CD4-positive, alpha-beta T cell (primary cell): ENCODE measurements at regions of chr16 and their contacts with region 1.

Region 1: DNA sequence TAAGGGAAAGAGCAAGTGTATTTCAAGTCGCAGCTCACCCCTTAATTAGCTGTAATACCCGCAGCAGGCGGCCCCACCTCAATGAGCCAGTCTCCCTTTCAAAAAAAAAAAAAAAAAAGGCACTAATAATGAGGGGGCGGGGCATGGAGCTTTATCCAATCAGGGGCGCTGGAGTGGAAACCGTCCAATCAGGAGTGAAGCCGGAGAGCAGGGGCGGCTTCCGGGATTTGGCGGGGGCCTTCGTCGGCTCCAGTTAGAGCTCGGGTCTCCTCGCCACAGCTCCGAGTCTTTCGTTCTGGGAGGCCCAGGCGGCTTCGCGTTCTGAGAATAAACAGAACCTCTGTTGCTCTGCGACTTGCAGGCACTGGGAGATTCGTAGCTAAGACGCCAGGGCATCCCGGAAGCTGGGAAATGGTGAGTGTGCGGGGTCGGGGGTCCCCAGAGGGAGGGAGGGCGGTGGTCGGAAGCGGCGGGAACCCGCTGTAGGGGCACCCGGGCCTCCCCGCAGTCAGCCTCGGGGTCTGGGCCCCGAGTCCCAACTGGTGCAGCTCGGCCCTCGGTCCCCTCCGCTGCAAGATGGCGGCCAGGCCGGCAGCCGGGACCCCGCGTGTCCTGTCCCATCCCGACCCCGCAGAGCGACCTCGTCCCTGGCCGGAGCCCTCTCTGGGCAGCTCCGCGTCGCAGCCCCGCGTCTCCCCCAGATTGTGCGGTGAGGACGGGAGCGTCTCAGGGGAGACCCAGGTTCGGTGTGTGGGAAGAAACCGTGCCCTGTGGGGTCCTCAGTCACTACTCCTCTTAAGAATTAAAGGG is at the start of gene ZNF267:
- DNase-seq: peak; percentile 88 to 97 (median 92)
- ATAC-seq: peak; percentile 69
- H3K4me3 ChIP-seq: peak within 1 kb of the TSS; percentile 84
- H3K4me3 Mint-ChIP-seq: peak within 1 kb of the TSS; percentile 98
- H3K27ac ChIP-seq: peak within 1 kb of the TSS; percentile 82 to 94
- H3K27ac Mint-ChIP-seq: peak within 1 kb of the TSS; percentile 74
- H3K4me1 ChIP-seq: peaks cover 80% of the 10 kb centered on the region
- H3K4me1 Mint-ChIP-seq: peaks cover 72% of the 10 kb centered on the region
- H3K27me3 ChIP-seq: no peaks in the 10 kb centered on the region
- H3K27me3 Mint-ChIP-seq: no peaks in the 10 kb centered on the region
- CTCF ChIP-seq: no peak
- total RNA-seq, gene ZNF267: 56.0 to 57.9 TPM

Region 2: DNA sequence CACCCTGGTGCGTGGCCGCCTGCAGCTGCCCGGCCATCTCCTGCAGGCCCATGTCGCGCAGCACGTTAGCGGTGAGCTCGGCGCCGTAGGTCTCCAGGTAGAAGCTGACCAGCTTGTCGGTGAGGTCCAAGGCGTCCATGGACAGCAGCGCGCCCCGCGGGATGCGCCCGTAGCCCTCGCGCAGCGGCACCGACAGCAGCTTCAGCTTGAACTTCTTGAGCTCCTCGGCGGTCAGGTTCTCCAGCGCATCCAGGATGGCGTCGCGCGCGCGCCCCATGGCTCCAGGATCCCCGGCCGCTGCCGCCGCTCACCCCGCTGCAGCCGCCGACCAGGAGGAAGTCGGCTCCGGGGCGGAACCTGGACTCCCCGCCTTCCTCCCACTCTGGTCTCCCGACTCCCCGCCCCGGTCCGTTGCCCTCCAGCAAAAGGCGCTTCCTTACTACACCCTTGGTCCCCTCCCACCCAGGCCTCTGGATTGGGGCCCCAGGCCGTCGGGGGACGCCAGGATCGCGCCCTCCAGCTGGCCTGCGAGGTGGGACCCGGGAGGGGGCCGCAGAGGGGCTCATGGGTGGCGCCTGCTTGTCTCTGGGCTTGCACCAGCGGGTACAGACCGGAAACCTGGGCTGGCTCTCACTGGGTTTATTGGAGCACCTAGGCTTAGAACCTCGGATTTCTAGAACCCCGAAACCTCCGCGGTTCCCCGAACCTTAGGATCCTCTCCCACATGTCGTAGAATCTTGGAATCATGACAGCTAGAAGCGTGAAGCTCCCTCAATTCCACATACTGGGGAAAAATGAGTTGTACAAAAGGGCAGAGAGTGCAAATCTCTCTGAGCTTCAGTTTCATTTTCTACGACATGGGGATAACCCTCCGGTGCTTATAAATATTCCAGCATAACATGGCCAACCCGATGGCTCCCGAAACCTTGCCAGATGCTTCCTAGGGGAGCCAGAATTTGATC is 671.1 kb before region 1 on chr16 and contains the start of gene PYCARD:
- CTCF ChIA-PET with region 1: no interaction called
- POLR2A ChIA-PET with region 1: no interaction called
- intact Hi-C with region 1: loop called in 1 of 2 experiments (anchors 10 kb)
- DNase-seq: peak in 7 of 14 experiments; percentile 24 to 64 (median 43)
- ATAC-seq: peak; percentile 27
- H3K4me3 ChIP-seq: peak within 1 kb of the TSS; percentile 92
- H3K4me3 Mint-ChIP-seq: peak within 1 kb of the TSS; percentile 94
- H3K27ac ChIP-seq: peak within 1 kb of the TSS in 1 of 2 donors; percentile 60
- H3K27ac Mint-ChIP-seq: peak within 1 kb of the TSS; percentile 90
- H3K4me1 ChIP-seq: peaks cover 45% of the 10 kb centered on the region
- H3K4me1 Mint-ChIP-seq: peaks cover 53% of the 10 kb centered on the region
- H3K27me3 ChIP-seq: no peaks in the 10 kb centered on the region
- H3K27me3 Mint-ChIP-seq: no peaks in the 10 kb centered on the region
- CTCF ChIP-seq: no peak
- total RNA-seq, gene PYCARD: 8.1 to 8.5 TPM

Region 3: DNA sequence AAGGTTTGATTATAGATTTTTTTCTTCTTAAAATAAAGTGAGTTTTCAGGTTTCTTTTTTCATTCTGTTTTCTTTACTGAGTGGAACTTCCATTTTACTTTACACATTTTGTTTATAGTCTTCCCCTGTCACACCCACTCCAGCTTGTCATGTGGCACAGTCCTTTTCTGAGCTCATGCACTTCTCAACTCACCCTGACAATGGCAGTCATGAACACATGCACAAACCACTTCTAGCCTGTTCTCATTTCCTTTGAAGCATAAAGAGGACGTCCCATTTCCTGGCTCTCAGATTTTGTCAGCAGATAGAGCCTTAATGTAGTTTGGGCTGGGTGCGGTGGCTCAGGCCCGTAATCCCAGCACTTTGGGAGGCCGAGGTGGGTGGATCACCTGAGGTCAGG is 178.1 kb before region 1 on chr16:
- CTCF ChIA-PET with region 1: interaction called, 3 read pairs
- POLR2A ChIA-PET with region 1: interaction called, 17 read pairs
- intact Hi-C with region 1: loop called (anchors 2 to 5 kb)
- DNase-seq: peak in 12 of 14 experiments; percentile 27 to 93 (median 53)
- ATAC-seq: peak; percentile 94
- H3K4me3 ChIP-seq: no peak overlapping the region
- H3K4me3 Mint-ChIP-seq: no peak overlapping the region
- H3K27ac ChIP-seq: peak overlapping the region in 1 of 2 donors; percentile 50
- H3K27ac Mint-ChIP-seq: no peak overlapping the region
- H3K4me1 ChIP-seq: peaks cover 31% of the 10 kb centered on the region
- H3K4me1 Mint-ChIP-seq: peaks cover 14% of the 10 kb centered on the region
- H3K27me3 ChIP-seq: no peaks in the 10 kb centered on the region
- H3K27me3 Mint-ChIP-seq: no peaks in the 10 kb centered on the region
- CTCF ChIP-seq: no peak

Region 4: GRCh38 chr16:31700526-31701388 is 173.0 kb before region 1 on chr16:
- CTCF ChIA-PET with region 1: interaction called, 3 read pairs
- POLR2A ChIA-PET with region 1: interaction called, 17 read pairs
- intact Hi-C with region 1: loop called (anchors 2 to 5 kb)
- DNase-seq: peak; percentile 67 to 93 (median 80)
- ATAC-seq: peak; percentile 72
- H3K4me3 ChIP-seq: peak overlapping the region; percentile 89
- H3K4me3 Mint-ChIP-seq: peak overlapping the region; percentile 96
- H3K27ac ChIP-seq: peak overlapping the region; percentile 88 to 92
- H3K27ac Mint-ChIP-seq: peak overlapping the region; percentile 99
- H3K4me1 ChIP-seq: peaks cover 45% of the 10 kb centered on the region
- H3K4me1 Mint-ChIP-seq: peaks cover 37% of the 10 kb centered on the region
- H3K27me3 ChIP-seq: no peaks in the 10 kb centered on the region
- H3K27me3 Mint-ChIP-seq: no peaks in the 10 kb centered on the region
- CTCF ChIP-seq: no peak

Region 5: DNA sequence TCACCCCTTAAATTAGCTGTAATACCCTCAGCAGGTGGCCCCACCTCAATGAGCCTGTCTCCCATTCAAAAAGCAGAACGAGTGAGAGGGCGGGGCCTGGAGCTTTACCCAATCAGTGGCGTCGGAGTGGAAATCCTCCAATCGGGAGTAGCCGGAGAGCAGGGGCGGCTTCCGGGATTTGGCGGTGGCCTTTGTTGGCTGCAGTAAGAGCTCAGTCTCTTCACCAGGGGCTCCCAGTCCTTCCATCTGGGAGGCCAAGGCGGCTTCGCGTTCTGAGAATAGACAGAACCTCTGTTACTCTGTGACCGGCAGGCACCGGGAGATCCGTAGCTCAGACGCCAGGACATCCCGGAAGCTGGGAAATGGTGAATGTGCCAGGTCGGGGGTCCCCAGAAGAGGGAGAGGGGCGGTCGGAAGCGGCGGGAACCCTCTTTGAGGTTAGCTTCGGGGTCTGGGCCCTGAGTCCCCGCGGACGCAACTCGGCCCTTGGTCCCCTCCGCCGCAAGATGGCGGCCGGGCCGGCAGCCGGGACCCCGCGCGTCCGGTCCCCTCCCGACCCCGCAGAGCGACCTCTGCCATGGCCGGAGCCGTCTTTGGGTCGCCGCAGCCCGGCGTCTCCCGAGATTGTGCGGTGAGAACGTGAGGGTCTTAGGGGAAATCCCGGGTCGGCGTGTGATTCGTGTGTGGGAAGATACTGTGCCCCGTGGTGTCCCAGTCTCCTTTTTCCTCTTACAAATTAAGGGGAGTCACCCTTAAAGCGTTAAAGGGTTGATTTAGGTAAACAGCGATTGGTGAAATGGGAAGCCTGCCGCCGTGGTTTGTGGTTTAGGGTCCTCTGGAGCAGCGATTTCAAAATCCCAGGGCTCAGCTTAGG is 160.5 kb before region 1 on chr16:
- CTCF ChIA-PET with region 1: no interaction called
- POLR2A ChIA-PET with region 1: interaction called, 16 read pairs
- intact Hi-C with region 1: loop called in 1 of 2 experiments (anchors 5 kb)
- DNase-seq: peak; percentile 81 to 94 (median 88)
- ATAC-seq: peak; percentile 82
- H3K4me3 ChIP-seq: peak overlapping the region; percentile 93
- H3K4me3 Mint-ChIP-seq: peak overlapping the region; percentile 100
- H3K27ac ChIP-seq: peak overlapping the region; percentile 83 to 87
- H3K27ac Mint-ChIP-seq: peak overlapping the region; percentile 96
- H3K4me1 ChIP-seq: peaks cover 33% of the 10 kb centered on the region
- H3K4me1 Mint-ChIP-seq: peaks cover 80% of the 10 kb centered on the region
- H3K27me3 ChIP-seq: no peaks in the 10 kb centered on the region
- H3K27me3 Mint-ChIP-seq: no peaks in the 10 kb centered on the region
- CTCF ChIP-seq: no peak

Region 6: GRCh38 chr16:31819386-31819785 is 54.4 kb before region 1 on chr16:
- CTCF ChIA-PET with region 1: no interaction called
- POLR2A ChIA-PET with region 1: no interaction called
- intact Hi-C with region 1: no loop called
- DNase-seq: no peak
- ATAC-seq: no peak
- H3K4me3 ChIP-seq: no peak overlapping the region
- H3K4me3 Mint-ChIP-seq: no peak overlapping the region
- H3K27ac ChIP-seq: no peak overlapping the region
- H3K27ac Mint-ChIP-seq: no peak overlapping the region
- H3K4me1 ChIP-seq: no peaks in the 10 kb centered on the region
- H3K4me1 Mint-ChIP-seq: no peaks in the 10 kb centered on the region
- H3K27me3 ChIP-seq: peaks cover 0 to 5% of the 10 kb centered on the region in 2 experiments
- H3K27me3 Mint-ChIP-seq: peaks cover 26% of the 10 kb centered on the region
- CTCF ChIP-seq: no peak

Region 7: DNA sequence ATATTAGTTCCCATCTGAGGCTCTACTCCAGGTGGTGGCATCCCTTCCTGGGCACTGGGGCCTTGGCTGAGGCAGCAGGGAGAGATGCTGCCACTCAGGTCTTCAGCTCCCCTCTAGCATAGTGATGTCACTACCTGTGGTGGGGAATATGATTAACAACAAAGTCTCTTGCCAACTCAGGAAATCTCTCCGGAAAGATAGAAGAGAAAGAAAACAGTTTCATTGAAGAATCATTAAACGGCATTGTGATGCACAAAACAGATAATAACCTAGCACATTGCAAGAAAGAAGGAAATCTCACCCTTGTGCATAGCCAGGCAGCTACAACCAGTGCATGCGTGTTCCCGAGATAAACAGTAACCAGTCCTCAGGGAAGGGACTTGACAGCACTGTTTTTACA is 12.3 kb before region 1 on chr16:
- CTCF ChIA-PET with region 1: interaction called, 41 read pairs
- POLR2A ChIA-PET with region 1: interaction called, 11 read pairs
- intact Hi-C with region 1: loop called in 1 of 2 experiments (anchors 1 kb)
- DNase-seq: peak in 4 of 14 experiments; percentile 35 to 69 (median 48)
- ATAC-seq: peak; percentile 84
- H3K4me3 ChIP-seq: no peak overlapping the region
- H3K4me3 Mint-ChIP-seq: peak overlapping the region; percentile 8
- H3K27ac ChIP-seq: peak overlapping the region in 1 of 2 donors; percentile 46
- H3K27ac Mint-ChIP-seq: peak overlapping the region; percentile 72
- H3K4me1 ChIP-seq: peaks cover 18% of the 10 kb centered on the region
- H3K4me1 Mint-ChIP-seq: peaks cover 26% of the 10 kb centered on the region
- H3K27me3 ChIP-seq: no peaks in the 10 kb centered on the region
- H3K27me3 Mint-ChIP-seq: no peaks in the 10 kb centered on the region
- CTCF ChIP-seq: no peak

Region 8: GRCh38 chr16:31920373-31920772 is 46.6 kb after region 1 on chr16:
- CTCF ChIA-PET with region 1: no interaction called
- POLR2A ChIA-PET with region 1: no interaction called
- intact Hi-C with region 1: loop called in 1 of 2 experiments (anchors 2 kb)
- DNase-seq: no peak
- ATAC-seq: no peak
- H3K4me3 ChIP-seq: no peak overlapping the region
- H3K4me3 Mint-ChIP-seq: no peak overlapping the region
- H3K27ac ChIP-seq: no peak overlapping the region
- H3K27ac Mint-ChIP-seq: no peak overlapping the region
- H3K4me1 ChIP-seq: no peaks in the 10 kb centered on the region
- H3K4me1 Mint-ChIP-seq: no peaks in the 10 kb centered on the region
- H3K27me3 ChIP-seq: no peaks in the 10 kb centered on the region
- H3K27me3 Mint-ChIP-seq: no peaks in the 10 kb centered on the region
- CTCF ChIP-seq: no peak